GM12878 (cell line): ENCODE measurements at regions of chr15 and their contacts with region 1.

Region 1: DNA sequence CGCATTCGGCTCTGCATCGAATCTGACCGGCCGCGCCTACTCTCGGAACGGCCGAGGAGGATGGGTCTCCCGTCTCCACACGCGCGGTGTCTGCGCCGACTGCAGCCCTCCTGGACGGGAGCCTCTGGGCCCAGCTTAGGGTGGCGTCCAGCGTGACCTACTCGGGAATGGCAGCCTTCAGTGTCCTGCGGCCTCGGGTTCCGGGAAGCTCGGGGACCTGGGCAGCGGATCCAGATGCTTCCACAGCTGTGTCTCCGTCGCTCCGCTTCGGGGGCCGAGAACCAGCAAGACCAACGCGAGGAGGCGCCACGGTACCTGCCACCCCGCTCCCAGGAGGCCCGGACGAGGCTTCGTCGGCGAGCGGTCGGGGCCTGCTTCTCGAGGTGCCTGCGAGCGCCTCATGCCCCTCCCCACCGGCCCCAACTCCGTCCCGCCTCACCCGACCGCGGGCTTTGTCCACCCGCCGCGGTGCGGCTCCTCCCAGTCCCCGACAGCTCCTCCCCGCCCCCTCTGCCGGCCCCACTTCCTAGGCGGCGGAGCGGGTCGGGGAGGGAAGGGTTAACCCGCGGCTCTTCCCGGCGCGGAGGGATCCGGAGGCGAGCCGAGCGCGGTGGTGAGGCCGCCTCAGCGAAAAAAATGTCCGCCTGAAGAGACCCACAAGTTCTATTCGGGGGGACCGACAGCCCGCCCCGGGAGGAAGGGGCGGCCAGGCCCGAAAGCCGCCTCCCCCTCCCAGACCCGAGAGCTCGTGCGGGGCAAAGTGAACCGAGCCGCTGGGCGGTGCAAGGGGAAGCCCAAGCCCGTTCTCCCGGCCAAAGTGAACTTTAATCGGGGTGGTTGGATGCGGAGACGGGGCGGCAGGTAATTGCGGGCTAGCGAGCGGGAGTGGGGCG is at the start of gene TCF12:
- DNase-seq: peak; percentile 68
- ATAC-seq: peak; percentile 88
- H3K4me3 ChIP-seq: peak within 1 kb of the TSS; percentile 86
- H3K27ac ChIP-seq: peak within 1 kb of the TSS; percentile 69
- H3K4me1 ChIP-seq: no peaks in the 10 kb centered on the region; the same call in 1 of the 2 replicates
- H3K27me3 ChIP-seq: no peaks in the 10 kb centered on the region
- CTCF ChIP-seq: peak; percentile 52 to 56 (median 53)
- EP300 ChIP-seq: no peak
- POLR2A ChIP-seq: peak; percentile 89
- RAD21 ChIP-seq: peak; percentile 60
- polyA plus RNA-seq, gene TCF12: 8.2 to 9.0 TPM

Region 2: DNA sequence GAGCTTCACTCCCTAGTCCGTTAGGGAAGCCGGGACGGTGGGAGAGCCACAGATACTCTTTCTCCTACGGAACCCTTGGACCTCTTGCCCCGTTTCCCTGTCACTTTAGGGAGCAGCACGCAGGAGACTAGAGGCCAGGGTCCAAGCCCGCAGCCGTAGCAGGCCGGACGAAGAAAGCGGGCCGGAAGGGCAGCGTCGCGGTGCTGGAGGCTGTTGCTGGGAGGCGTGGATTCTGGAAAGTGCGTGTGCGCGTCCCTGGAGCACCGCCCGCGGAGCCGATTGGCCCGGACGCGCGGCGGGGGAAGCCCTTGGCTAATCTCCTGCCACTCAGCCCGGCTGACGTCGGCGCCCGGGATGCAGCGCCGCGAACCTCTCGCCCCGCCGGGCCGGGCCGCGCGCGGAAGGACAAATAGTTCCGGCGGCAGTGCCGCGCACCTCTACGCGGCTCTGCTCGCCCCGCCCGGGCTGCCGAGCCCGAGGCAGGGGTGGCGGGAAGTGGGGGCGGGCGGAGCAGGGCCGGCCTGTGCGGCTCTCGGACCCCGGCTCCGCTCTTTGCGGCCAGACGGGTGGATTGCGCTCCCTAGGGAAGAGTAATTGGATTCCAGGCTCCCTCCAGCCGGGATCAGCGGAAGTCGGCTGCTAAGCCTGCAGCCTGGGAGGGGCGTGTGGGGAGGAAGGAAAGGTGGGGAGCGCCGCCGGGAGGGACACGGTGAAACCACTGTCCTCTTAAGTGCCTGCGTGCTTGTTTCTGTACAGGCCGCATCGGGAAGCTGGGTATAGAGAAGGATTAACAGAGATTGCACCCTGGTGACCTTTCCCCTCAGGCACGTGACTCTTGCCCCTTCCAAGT is 31.1 kb before region 1 on chr15:
- CTCF ChIA-PET with region 1: interaction called, 7 read pairs
- POLR2A ChIA-PET with region 1: no interaction called
- RAD21 ChIA-PET with region 1: interaction called, 5 read pairs
- SMC1A ChIA-PET with region 1: interaction called, 3 read pairs
- in situ Hi-C with region 1: no loop called
- intact Hi-C with region 1: loop called (anchors 1 kb)
- DNase-seq: peak; percentile 40
- ATAC-seq: peak; percentile 95
- H3K4me3 ChIP-seq: peak overlapping the region; percentile 64
- H3K27ac ChIP-seq: peak overlapping the region; percentile 71
- H3K4me1 ChIP-seq: peaks cover 8% of the 10 kb centered on the region
- H3K27me3 ChIP-seq: no peaks in the 10 kb centered on the region
- CTCF ChIP-seq: no peak
- EP300 ChIP-seq: no peak
- POLR2A ChIP-seq: peak; percentile 91
- RAD21 ChIP-seq: no peak

Region 3: DNA sequence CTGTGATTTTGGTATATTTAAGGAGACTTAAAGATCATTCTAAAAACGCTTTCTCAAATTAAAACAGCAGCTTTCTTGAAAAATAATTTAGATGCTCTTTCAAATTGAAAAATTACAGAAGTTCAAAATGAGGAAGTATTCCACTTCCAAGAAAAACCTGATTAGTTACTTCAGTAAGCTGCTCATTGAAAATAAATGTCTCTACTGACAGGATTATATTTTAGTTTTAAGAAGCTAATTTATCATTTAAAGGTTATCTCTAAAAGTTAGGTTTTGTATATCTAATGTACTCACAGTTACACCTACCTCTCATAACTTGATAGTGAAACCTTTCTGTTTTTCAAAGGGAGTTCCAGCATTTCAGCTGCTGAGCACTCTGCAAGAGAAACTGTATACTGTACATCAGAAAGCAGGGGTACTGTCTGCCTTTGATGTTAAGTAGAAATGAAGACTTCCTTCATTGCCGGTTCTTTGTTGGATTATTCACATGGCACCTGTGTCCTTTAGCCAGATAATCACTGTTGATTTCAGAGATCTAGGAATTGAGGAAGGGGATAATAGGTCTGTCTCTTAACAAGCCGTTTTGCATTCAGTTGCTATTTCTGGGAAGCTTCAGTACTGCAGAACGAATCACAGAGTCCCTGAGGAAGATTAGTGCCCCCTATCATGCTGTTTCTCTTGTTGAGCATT is 161.8 kb after region 1 on chr15:
- CTCF ChIA-PET with region 1: interaction called, 4 read pairs
- POLR2A ChIA-PET with region 1: no interaction called
- RAD21 ChIA-PET with region 1: no interaction called
- SMC1A ChIA-PET with region 1: interaction called, 4 read pairs
- in situ Hi-C with region 1: no loop called
- intact Hi-C with region 1: loop called (anchors 10 kb)
- DNase-seq: no peak
- ATAC-seq: peak; percentile 85
- H3K4me3 ChIP-seq: peak overlapping the region; percentile 34; the same call in 1 of the 2 replicates
- H3K27ac ChIP-seq: peak overlapping the region; percentile 65
- H3K4me1 ChIP-seq: peaks cover 7% of the 10 kb centered on the region
- H3K27me3 ChIP-seq: no peaks in the 10 kb centered on the region
- CTCF ChIP-seq: 0 out of 6 replicates have a peak, but pooled peaks of 1 of the 3 experiments have one; percentile 12
- EP300 ChIP-seq: no peak
- POLR2A ChIP-seq: no peak
- RAD21 ChIP-seq: no peak

Region 4: DNA sequence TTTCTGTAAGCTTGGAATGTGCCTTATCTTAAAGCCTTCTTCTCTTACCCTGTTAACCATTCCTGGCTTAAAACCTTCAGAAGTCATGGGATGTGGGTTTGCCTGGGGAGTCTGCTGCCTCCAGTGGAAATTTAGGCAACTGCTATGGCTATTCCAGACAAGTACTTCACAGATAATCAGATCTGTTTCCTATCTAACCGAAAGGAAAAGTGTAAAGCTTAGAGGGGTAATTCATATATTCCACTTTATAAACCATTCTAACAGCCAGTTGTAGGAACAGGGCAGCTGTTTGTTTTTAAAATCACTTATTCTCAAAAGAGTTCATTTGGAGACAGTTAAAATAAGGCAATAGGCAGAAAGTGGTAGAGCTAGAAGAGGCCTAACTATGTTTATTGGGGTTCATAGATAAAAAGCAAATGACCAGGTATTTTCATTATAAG is 220.1 kb after region 1 on chr15:
- CTCF ChIA-PET with region 1: interaction called, 4 read pairs
- POLR2A ChIA-PET with region 1: no interaction called
- RAD21 ChIA-PET with region 1: interaction called, 6 read pairs
- SMC1A ChIA-PET with region 1: interaction called, 8 read pairs
- in situ Hi-C with region 1: no loop called
- intact Hi-C with region 1: loop called (anchors 5 kb)
- DNase-seq: no peak
- ATAC-seq: peak; percentile 79
- H3K4me3 ChIP-seq: no peak overlapping the region
- H3K27ac ChIP-seq: no peak overlapping the region
- H3K4me1 ChIP-seq: peaks cover under 1% of the 10 kb centered on the region
- H3K27me3 ChIP-seq: no peaks in the 10 kb centered on the region
- CTCF ChIP-seq: peak; percentile 51 to 69 (median 68)
- EP300 ChIP-seq: no peak
- POLR2A ChIP-seq: no peak
- RAD21 ChIP-seq: peak; percentile 61

Region 5: GRCh38 chr15:57213862-57214261 is 295.6 kb after region 1 on chr15:
- CTCF ChIA-PET with region 1: interaction called, 14 read pairs
- POLR2A ChIA-PET with region 1: no interaction called
- RAD21 ChIA-PET with region 1: interaction called, 3 read pairs
- SMC1A ChIA-PET with region 1: no interaction called
- in situ Hi-C with region 1: no loop called
- intact Hi-C with region 1: loop called (anchors 1 kb)
- DNase-seq: no peak
- ATAC-seq: peak; percentile 86
- H3K4me3 ChIP-seq: no peak overlapping the region
- H3K27ac ChIP-seq: no peak overlapping the region
- H3K4me1 ChIP-seq: no peaks in the 10 kb centered on the region
- H3K27me3 ChIP-seq: no peaks in the 10 kb centered on the region
- CTCF ChIP-seq: peak; percentile 42 to 67 (median 48); a peak in 5 of 6 replicates
- EP300 ChIP-seq: no peak
- POLR2A ChIP-seq: no peak
- RAD21 ChIP-seq: peak; percentile 83